ENCODE measurements at regions of chr17 and their contacts with region 1.

Region 1: GRCh38 chr17:40475234-40475908 is 26.1 kb downstream of the TNS4 start:
- DNase-seq: no peak
- ATAC-seq: no peak
- H3K4me3 ChIP-seq: no peak overlapping the region
- H3K27ac ChIP-seq: no peak overlapping the region
- H3K4me1 ChIP-seq: no peaks in the 10 kb centered on the region
- H3K27me3 ChIP-seq: no peaks in the 10 kb centered on the region
- CTCF ChIP-seq: no peak

Region 2: DNA sequence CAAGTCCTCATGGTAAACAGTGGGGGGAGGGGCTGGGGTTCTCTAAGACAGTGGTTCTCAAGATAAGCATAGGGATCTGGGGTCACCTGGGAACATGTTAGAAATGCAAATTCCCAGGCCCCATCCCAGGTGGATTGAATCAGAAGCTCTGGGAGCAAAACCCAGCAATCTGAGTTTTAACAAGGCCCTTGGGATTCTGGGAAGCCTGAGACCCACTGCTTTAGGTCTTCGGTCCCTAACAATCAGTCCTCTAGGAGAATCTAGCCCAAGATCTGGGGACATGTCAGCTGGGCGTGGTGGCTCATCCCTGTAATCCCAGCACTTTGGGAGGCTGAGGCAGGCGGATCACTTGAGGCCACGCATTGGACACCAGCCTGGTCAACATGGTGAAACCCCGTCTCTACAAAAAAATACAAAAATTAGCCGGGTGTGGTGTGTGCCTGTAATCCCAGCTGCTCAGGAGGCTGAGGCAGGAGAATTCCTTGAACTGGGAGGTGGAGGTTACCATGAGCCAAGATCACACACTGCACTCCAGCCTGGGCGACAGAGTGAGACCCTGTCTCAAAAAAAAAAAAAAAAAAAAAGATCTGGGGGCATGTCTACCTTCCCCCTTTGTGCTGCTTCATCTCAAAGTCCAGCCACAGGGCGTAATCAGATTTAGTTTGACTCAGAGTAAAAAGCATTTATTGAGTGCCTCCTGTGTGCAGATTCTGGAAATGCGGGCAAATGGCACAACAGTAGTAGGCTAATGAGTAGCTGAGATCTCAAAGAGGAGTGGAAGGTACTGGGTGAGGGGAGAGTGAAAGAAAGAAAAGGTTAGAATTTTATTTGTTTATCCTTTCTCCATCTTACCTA is 366.2 kb before region 1 on chr17:
- CTCF ChIA-PET with region 1: no interaction called
- POLR2A ChIA-PET with region 1: no interaction called
- in situ Hi-C with region 1: no loop called
- intact Hi-C with region 1: no loop called
- DNase-seq: no peak
- ATAC-seq: no peak
- H3K4me3 ChIP-seq: no peak overlapping the region
- H3K27ac ChIP-seq: no peak overlapping the region
- H3K4me1 ChIP-seq: peaks cover 40% of the 10 kb centered on the region
- H3K27me3 ChIP-seq: no peaks in the 10 kb centered on the region
- CTCF ChIP-seq: no peak

Region 3: DNA sequence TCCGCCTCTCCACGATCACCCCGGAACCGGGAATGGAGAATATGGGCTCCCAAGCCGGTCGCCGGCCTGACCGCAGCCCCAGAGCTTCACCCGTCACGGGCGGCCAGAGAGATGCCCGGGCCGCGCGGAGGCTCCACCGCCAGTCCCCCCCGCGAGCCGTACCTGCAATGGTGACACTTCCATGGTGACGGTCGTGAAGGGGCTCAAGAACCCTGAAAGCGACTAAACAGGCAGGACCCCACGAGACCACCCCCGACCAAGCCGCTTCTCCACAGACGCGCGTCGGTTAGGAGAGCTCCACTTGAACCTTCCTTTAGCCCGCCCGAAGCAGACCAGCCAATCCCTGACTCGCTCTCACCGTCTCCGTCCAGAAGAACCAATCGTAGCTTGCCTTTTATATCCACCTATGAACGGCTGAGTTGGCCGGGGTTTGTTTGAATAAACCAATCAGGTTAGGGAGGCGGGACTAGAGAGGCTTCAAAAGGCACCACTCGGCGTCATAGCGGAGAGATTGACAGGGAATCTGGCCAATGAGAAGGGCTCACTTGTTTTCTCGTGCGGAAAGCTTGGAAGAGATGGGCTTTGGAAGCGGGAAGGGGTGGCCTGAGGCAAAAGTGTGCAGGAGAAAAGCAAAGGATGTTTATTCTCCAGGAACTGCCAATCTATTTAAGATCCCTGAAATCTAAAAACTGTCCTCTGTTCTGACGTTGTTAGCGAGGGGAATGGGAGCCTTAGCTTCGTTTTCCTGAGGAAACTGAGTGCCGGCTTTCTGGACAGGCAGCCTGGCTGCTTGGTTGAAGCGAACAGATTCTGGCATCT is 57.6 kb before region 1 on chr17 and contains the start of gene TOP2A:
- CTCF ChIA-PET with region 1: interaction called, 12 read pairs
- POLR2A ChIA-PET with region 1: no interaction called
- in situ Hi-C with region 1: no loop called
- intact Hi-C with region 1: no loop called
- DNase-seq: peak; percentile 99
- ATAC-seq: peak; percentile 97
- H3K4me3 ChIP-seq: peak within 1 kb of the TSS; percentile 83 to 86
- H3K27ac ChIP-seq: peak within 1 kb of the TSS; percentile 95
- H3K4me1 ChIP-seq: peaks cover 18% of the 10 kb centered on the region
- H3K27me3 ChIP-seq: no peaks in the 10 kb centered on the region
- CTCF ChIP-seq: no peak
- total RNA-seq, gene TOP2A: 230 TPM

Region 4: GRCh38 chr17:40443583-40444327 is 31.6 kb before region 1 on chr17:
- CTCF ChIA-PET with region 1: interaction called, 12 read pairs
- POLR2A ChIA-PET with region 1: no interaction called
- in situ Hi-C with region 1: no loop called
- intact Hi-C with region 1: loop called (anchors 5 kb)
- DNase-seq: no peak
- ATAC-seq: peak; percentile 89
- H3K4me3 ChIP-seq: peak overlapping the region; percentile 41 to 63
- H3K27ac ChIP-seq: no peak overlapping the region
- H3K4me1 ChIP-seq: peaks cover 11% of the 10 kb centered on the region
- H3K27me3 ChIP-seq: no peaks in the 10 kb centered on the region
- CTCF ChIP-seq: peak; percentile 82

Region 5: DNA sequence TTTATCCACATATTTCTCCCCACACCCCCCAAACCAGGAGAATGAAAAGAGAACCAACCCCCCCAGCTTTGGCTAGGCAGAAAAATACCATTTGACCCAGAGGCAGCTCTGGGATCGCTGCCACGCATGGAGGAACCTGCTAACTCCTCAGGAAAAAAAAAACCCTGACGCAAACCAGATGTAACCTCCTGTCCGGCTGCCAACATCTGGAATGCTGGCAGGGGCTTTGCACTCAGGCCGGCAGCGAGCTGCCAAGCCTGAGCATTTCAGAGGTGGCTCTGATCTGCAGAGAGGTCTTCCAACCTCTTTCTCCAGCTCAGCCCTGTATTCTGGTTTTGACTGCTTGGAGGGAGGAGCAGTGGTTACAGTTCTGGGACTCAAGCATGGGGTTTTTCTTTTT is 24.0 kb before region 1 on chr17:
- CTCF ChIA-PET with region 1: interaction called, 21 read pairs
- POLR2A ChIA-PET with region 1: no interaction called
- in situ Hi-C with region 1: no loop called
- intact Hi-C with region 1: no loop called
- DNase-seq: no peak
- ATAC-seq: no peak
- H3K4me3 ChIP-seq: no peak overlapping the region
- H3K27ac ChIP-seq: no peak overlapping the region
- H3K4me1 ChIP-seq: no peaks in the 10 kb centered on the region
- H3K27me3 ChIP-seq: no peaks in the 10 kb centered on the region
- CTCF ChIP-seq: no peak

Region 6: DNA sequence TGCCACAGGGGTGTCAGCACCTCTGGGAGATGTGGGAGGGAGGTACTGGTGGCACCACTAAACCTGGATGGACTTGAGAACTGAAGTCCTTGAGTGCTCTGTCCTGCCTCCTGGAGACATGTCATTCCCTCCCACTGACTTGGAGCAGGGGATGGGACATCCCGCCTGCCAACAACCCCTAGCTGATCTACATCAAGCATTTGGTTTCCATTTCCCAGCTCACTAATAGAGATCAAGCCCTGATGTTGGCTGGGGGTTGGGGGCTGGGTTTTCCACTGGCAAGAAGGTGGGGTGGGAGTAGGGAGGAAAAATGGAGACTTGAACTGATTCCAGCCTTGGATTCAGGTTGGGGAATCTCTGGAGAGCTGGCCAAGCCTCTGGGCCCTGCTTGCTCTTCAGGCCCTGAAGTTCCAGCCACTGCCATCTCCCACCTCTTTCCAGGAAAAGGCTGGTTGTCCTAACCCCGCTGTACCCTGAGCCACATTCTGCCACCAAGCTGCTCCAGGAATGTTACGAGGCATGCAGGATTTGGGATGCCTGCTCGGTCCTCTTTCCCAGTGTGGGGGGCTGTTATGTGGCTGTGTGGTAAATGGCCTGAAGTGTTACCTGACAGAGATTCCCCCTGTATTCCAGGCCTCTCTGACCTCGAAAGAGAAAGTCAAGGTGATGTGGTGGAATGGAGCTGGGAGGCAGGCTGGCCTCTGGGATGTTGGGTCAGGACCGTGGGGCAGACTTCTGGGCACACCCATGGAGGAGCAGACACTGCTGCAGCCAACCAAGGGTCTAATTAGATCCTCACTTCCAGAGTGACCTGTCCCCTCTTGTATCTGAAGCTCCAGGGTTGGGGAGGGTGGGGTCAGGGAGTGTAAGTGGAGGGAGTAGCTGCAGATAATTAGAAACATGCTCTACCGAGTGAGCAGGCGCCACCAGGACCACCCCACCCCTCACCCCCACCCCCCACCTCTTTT is 15.5 kb before region 1 on chr17:
- CTCF ChIA-PET with region 1: interaction called, 21 read pairs
- POLR2A ChIA-PET with region 1: no interaction called
- in situ Hi-C with region 1: no loop called
- intact Hi-C with region 1: no loop called
- DNase-seq: no peak
- ATAC-seq: 0 out of 2 replicates have a peak, but pooled peaks have one; percentile 12
- H3K4me3 ChIP-seq: no peak overlapping the region
- H3K27ac ChIP-seq: no peak overlapping the region
- H3K4me1 ChIP-seq: peaks cover 3% of the 10 kb centered on the region; the same call in 1 of the 2 replicates
- H3K27me3 ChIP-seq: no peaks in the 10 kb centered on the region
- CTCF ChIP-seq: no peak

Measured in Panc1 (cell line).